IMR-90 (cell line): ENCODE measurements at regions of chr11 and their contacts with region 1.

Region 1: DNA sequence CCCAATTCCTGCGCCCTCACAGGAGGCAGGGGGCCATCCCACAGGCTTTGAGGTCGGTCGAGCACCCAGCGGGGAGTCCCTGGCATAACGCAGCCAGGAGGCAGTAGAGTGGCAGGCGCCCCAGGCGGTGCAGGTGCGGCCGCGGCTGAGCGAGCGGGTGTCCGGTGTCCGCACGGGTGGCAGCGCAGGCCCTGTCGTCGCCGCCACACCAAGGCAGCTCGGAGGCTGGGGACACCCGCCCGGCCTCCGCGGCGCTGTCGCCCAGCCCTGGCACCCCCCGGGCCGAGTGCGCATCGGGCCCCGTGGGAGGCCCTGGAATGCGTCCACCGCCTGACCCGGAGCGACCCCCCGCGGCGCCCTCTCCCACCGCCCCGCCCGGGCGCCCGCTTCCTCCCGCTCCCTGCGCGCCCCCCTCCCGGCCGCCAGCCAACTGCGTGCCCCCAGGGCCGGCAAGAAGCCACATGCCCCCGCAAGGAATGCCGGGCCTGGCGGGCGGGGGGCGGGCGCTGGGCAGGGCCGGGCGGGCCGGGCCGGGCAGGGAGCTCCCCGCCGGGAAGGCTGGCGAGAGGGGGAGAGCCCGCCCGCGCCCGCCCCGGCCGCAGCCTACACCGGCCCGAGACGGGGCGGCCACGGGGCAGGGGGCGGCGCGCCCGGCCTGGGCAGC is 33.9 kb downstream of the PRDM11 start:
- DNase-seq: no peak
- ATAC-seq: peak; percentile 92
- H3K4me3 ChIP-seq: peak overlapping the region; percentile 42
- H3K27ac ChIP-seq: peak overlapping the region; percentile 47; the same call in 1 of the 2 replicates
- H3K4me1 ChIP-seq: peaks cover 12% of the 10 kb centered on the region
- H3K27me3 ChIP-seq: no peaks in the 10 kb centered on the region
- CTCF ChIP-seq: peak; percentile 28; the same call in 1 of the 2 replicates
- POLR2A ChIP-seq: no peak
- RAD21 ChIP-seq: no peak

Region 2: DNA sequence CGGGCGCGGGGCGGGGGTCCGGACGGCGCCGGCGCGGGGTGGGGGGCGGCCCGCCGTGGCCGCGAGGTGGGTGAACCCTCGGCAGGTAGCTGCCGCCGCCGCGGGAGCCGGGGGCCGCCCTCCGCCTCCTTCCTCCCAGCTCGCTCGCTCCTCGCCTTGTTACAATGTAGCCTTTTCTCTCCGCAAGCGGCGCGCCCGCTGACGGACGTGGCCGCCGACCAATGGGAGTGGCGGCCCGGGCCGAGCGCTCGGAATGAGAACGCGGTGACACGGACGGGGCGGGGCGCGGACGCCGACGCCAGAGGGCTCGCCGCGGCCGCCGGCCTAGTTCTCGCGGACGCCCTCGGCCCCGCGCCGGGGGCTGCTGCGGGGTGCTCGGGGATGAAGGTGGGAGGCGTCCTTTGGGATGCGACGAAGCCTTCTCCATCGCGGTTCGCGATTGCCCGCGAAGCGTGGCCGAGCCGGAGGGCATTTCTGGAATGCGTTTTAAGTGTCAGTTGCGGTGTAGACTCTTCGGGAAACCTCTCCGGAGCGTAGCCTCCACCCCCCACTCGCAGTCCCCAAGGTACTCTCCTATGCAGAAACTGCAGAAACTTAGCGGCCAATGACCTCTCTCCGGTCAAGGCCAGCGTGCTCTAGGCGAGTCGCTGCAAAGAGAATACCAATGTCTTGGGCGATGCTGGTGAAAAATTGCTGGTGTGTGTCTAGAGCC is 33.1 kb before region 1 on chr11:
- CTCF ChIA-PET with region 1: no interaction called
- POLR2A ChIA-PET with region 1: no interaction called
- dilution Hi-C with region 1: no loop called
- in situ Hi-C with region 1: no loop called
- intact Hi-C with region 1: loop called (anchors 2 kb)
- DNase-seq: peak; percentile 94
- ATAC-seq: peak; percentile 96
- H3K4me3 ChIP-seq: peak overlapping the region; percentile 90
- H3K27ac ChIP-seq: peak overlapping the region; percentile 77
- H3K4me1 ChIP-seq: peaks cover 2% of the 10 kb centered on the region; the same call in 1 of the 2 replicates
- H3K27me3 ChIP-seq: peaks cover 3% of the 10 kb centered on the region
- CTCF ChIP-seq: no peak
- POLR2A ChIP-seq: peak; percentile 82; the same call in 1 of the 2 replicates
- RAD21 ChIP-seq: no peak

Region 3: GRCh38 chr11:45209891-45210699 is 29.8 kb after region 1 on chr11:
- CTCF ChIA-PET with region 1: no interaction called
- POLR2A ChIA-PET with region 1: no interaction called
- dilution Hi-C with region 1: no loop called
- in situ Hi-C with region 1: no loop called
- intact Hi-C with region 1: no loop called
- DNase-seq: peak; percentile 21
- ATAC-seq: peak; percentile 68
- H3K4me3 ChIP-seq: no peak overlapping the region
- H3K27ac ChIP-seq: no peak overlapping the region
- H3K4me1 ChIP-seq: no peaks in the 10 kb centered on the region; the same call in 1 of the 2 replicates
- H3K27me3 ChIP-seq: no peaks in the 10 kb centered on the region
- CTCF ChIP-seq: no peak
- POLR2A ChIP-seq: no peak
- RAD21 ChIP-seq: no peak